Activated T-helper 2 cell treated with anti-CD3 and anti-CD28 coated beads, Interferon-gamma antibody, Interleukin-2, Interleukin-4, amounts not matched to agents 10 μg/mL and 5 μg/mL and 100 μg/mL, durations not matched to agents 14 hours and 24 hours and 36 hours (primary cell): ENCODE measurements at regions of chr6 and their contacts with region 1.

Region 1: GRCh38 chr6:135088818-135089809 is 34.5 kb upstream of the HBS1L start:
- DNase-seq: peak; percentile 44
- H3K4me3 Mint-ChIP-seq: peak overlapping the region; percentile 30
- H3K27ac Mint-ChIP-seq: peak overlapping the region; percentile 92
- H3K4me1 Mint-ChIP-seq: peaks cover 85% of the 10 kb centered on the region
- H3K27me3 Mint-ChIP-seq: no peaks in the 10 kb centered on the region

Region 2: GRCh38 chr6:134979142-134979541 is 110.0 kb before region 1 on chr6:
- intact Hi-C with region 1: loop called (anchors 1 kb)
- DNase-seq: peak; percentile 55
- H3K4me3 Mint-ChIP-seq: peak overlapping the region; percentile 57
- H3K27ac Mint-ChIP-seq: peak overlapping the region; percentile 78
- H3K4me1 Mint-ChIP-seq: peaks cover 52% of the 10 kb centered on the region
- H3K27me3 Mint-ChIP-seq: no peaks in the 10 kb centered on the region

Region 3: GRCh38 chr6:135030056-135030473 is 59.0 kb before region 1 on chr6:
- intact Hi-C with region 1: loop called (anchors 1 kb)
- DNase-seq: no peak
- H3K4me3 Mint-ChIP-seq: peak overlapping the region; percentile 45
- H3K27ac Mint-ChIP-seq: peak overlapping the region; percentile 78
- H3K4me1 Mint-ChIP-seq: peaks cover 51% of the 10 kb centered on the region
- H3K27me3 Mint-ChIP-seq: no peaks in the 10 kb centered on the region

Region 4: DNA sequence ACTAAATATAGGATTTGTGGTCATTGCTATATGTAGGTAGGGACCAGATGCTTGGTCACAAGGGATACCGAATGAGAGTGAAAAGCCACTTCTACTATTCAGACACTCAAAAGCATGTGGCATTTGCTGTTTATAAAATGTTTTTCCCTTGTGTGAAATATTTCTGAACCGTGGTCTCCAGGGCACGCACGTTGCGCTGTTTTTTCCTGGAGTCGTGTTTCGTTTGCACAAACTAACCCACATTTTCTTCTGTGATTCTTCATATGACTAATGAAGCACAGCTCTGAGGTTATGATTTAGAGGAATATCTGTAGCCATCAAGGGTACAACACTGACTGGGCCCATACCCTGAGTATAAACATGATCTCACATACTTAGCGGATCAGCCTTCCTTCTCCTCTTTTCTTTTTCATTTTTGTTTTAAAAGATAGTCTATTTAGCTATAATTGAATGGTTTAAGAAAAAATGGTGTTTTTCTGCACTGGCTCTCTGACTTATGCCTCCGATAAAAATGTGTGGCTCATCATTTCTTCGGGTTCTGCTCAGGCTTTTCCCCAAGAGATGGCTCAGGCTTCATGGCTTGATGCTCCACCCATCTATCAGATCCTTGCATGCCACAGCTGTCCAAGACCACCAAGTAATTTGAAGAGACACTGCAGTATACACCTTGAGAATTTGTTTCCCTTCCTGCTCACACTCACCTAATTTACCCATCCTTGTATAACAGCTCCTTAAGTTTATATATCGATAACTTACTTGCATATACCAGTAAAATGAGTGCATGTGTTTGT is 25.4 kb after region 1 on chr6:
- intact Hi-C with region 1: loop called (anchors 1 kb)
- DNase-seq: peak; percentile 45
- H3K4me3 Mint-ChIP-seq: peak overlapping the region; percentile 58
- H3K27ac Mint-ChIP-seq: peak overlapping the region; percentile 95
- H3K4me1 Mint-ChIP-seq: peaks cover 81% of the 10 kb centered on the region
- H3K27me3 Mint-ChIP-seq: no peaks in the 10 kb centered on the region

Region 5: GRCh38 chr6:135145063-135145800 is 56.1 kb after region 1 on chr6:
- intact Hi-C with region 1: loop called (anchors 1 kb)
- DNase-seq: no peak
- H3K4me3 Mint-ChIP-seq: peak overlapping the region; percentile 55
- H3K27ac Mint-ChIP-seq: peak overlapping the region; percentile 89
- H3K4me1 Mint-ChIP-seq: peaks cover 64% of the 10 kb centered on the region
- H3K27me3 Mint-ChIP-seq: no peaks in the 10 kb centered on the region

Region 6: GRCh38 chr6:135291288-135292116 is 202.4 kb after region 1 on chr6:
- intact Hi-C with region 1: loop called (anchors 1 kb)
- DNase-seq: no peak
- H3K4me3 Mint-ChIP-seq: no peak overlapping the region
- H3K27ac Mint-ChIP-seq: no peak overlapping the region
- H3K4me1 Mint-ChIP-seq: peaks cover 21% of the 10 kb centered on the region
- H3K27me3 Mint-ChIP-seq: no peaks in the 10 kb centered on the region

Region 7: DNA sequence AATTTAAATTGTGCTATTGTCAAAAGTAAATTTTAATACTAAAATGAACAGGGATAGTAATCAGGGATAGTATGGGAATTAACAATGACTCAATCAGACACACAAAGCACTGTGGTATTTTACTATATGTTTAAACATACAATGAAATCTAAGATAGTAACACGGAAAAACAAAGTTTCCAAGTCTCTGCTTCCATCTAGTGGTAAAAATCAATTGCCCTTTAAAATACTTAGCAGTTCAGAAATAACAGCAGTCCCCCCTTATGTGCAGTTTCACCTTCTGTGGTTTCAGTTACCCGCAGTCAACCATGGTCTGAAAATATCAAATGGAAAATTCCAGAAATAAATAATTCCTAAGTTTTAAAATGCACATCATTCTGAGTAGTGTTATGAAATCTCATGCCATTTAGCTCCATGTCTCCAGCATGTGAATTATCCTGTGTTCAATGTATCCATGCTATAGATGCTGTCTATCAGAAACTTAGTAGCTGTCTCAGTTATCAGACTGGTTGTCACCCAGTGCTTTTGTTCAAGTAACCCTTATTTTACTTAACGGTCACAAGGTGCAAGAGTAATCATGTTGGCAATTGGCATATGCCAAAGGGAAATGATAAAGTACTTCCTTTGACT is 349.9 kb after region 1 on chr6:
- intact Hi-C with region 1: loop called (anchors 2 kb)
- DNase-seq: no peak
- H3K4me3 Mint-ChIP-seq: peak overlapping the region; percentile 37
- H3K27ac Mint-ChIP-seq: peak overlapping the region; percentile 75
- H3K4me1 Mint-ChIP-seq: peaks cover 35% of the 10 kb centered on the region
- H3K27me3 Mint-ChIP-seq: no peaks in the 10 kb centered on the region